Thyroid gland (tissue), 4 donors: ENCODE measurements at regions of chr21 and their contacts with region 1.

Region 1: GRCh38 chr21:43664358-43664757 is 5.0 kb downstream of the RRP1B start:
- DNase-seq: no peak
- H3K4me3 ChIP-seq: no peak overlapping the region
- H3K27ac ChIP-seq: no peak overlapping the region
- H3K4me1 ChIP-seq: peaks cover 7 to 12% of the 10 kb centered on the region in 2 donors
- H3K27me3 ChIP-seq: no peaks in the 10 kb centered on the region
- CTCF ChIP-seq: no peak
- POLR2A ChIP-seq: no peak

Region 2: GRCh38 chr21:43703035-43703880 is 38.9 kb after region 1 on chr21:
- intact Hi-C with region 1: loop called (anchors 5 kb)
- DNase-seq: peak; percentile 67 to 76
- H3K4me3 ChIP-seq: no peak overlapping the region
- H3K27ac ChIP-seq: no peak overlapping the region
- H3K4me1 ChIP-seq: peaks cover 0 to 13% of the 10 kb centered on the region in 2 donors
- H3K27me3 ChIP-seq: no peaks in the 10 kb centered on the region
- CTCF ChIP-seq: no peak
- POLR2A ChIP-seq: peak in 1 of 2 donors; percentile 10

Region 3: DNA sequence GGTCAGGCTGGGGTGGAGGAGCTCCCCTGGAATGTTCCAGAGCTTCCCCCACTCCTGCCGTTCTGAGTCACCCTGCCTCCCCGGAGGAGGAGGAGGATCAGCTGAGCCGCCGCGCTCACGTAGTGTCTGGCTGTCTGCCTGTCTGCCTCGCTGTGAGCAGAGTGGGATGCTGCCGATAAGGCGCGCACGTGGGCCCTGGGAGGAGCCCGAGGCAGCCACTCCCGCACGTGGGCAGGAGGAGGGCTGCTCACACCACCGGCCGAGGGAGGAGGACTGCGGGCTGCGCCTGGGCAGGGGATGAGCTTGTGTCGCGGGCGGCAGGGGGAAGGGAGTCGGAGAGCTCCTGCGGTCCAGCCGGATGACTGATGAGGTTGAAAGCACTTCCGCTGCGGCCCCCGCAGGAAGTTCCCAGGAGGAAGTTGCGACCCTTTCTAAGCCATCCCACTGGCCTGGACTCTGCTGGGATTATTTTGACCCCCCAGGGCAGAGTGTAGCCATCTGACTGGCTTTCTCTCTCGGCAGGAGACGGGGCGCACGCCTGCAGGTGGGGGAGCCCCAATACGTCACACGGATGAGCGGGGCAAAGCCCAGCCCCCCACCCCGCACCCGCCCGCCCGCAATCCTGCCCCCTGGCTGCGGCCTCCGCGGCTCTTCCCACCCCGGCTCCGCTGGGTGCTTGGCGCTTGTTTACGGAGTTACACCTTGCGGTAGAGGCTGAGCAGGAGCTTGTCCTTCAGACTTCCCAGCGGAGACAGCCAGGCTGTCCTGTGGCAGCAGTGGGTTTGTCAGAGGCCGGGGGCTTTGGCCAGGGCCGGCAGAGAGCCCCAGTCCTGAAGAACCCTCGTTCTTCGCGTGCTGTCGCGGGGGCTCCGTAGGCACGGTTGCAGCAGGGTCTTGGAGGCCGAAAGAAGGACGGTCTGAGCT is 64.4 kb after region 1 on chr21:
- intact Hi-C with region 1: no loop called
- DNase-seq: peak; percentile 98
- H3K4me3 ChIP-seq: peak overlapping the region in 1 of 3 donors; percentile 50
- H3K27ac ChIP-seq: peak overlapping the region; percentile 93 to 100 (median 99)
- H3K4me1 ChIP-seq: peaks cover 48 to 78% of the 10 kb centered on the region in 2 donors
- H3K27me3 ChIP-seq: no peaks in the 10 kb centered on the region
- CTCF ChIP-seq: peak in 1 of 6 experiments; percentile 35
- POLR2A ChIP-seq: peak in 1 of 2 donors; percentile 90

Region 4: GRCh38 chr21:44375281-44375651 is 710.9 kb after region 1 on chr21:
- intact Hi-C with region 1: no loop called
- DNase-seq: no peak
- H3K4me3 ChIP-seq: no peak overlapping the region
- H3K27ac ChIP-seq: no peak overlapping the region
- H3K4me1 ChIP-seq: no peaks in the 10 kb centered on the region
- H3K27me3 ChIP-seq: no peaks in the 10 kb centered on the region
- CTCF ChIP-seq: no peak
- POLR2A ChIP-seq: no peak